ENCODE measurements at regions of chr20 and their contacts with region 1.

Region 1: DNA sequence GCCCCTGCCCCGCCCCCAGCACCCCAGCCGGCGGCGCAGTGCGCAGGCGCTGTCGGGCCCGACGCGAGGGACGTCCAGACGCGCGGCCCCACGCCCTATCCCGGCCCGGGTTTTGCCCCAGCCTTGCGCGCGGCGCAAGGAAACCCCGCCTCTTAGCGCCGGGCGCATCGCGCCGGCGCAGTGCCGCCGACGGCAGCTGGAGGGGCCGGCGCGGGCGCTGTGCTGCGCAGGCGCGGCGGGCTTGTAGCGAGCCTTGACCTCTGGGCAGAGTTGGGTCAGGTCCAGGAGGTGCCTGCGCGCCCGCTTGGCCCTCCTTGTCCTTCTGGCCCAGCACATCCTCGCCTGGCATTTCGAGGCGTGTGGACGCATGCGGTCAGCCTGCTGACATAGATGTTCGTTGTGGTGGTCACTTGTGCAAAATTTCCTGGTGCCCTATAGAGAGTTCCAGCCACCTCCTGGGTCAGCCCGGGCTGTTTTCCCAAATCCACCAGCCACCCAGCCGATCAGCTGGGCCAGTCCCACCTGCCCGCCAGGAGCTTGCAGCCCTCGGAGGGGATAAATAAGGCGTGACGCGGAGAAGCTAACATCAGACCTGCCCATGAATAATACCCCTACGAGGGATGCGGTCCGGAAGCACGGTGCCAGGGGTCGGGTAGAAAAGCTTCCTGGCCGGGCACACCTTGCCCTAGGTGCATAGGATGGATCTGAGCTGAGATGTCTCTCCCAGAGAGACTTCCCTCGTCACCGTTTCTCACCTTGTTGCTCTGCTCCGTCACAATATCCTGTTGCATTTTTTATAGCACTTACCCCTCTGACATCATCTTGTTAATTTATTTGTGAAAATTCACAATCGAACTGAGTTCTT is 442 bp upstream of the PRELID3B start:
- DNase-seq: no peak
- H3K4me3 ChIP-seq: peak overlapping the region; percentile 73 to 91
- H3K27ac ChIP-seq: peak overlapping the region; percentile 88
- H3K4me1 ChIP-seq: peaks cover 33% of the 10 kb centered on the region
- H3K27me3 ChIP-seq: no peaks in the 10 kb centered on the region
- CTCF ChIP-seq: peak in 1 of 3 experiments; percentile 20
- POLR2A ChIP-seq: no peak

Region 2: GRCh38 chr20:58980700-58981627 is 62.1 kb before region 1 on chr20 and contains the start of gene NELFCD:
- intact Hi-C with region 1: loop called (anchors 5 kb)
- DNase-seq: peak in 1 of 2 donors; percentile 87
- H3K4me3 ChIP-seq: peak within 1 kb of the TSS; percentile 71 to 95
- H3K27ac ChIP-seq: peak within 1 kb of the TSS; percentile 83
- H3K4me1 ChIP-seq: peaks cover 39% of the 10 kb centered on the region
- H3K27me3 ChIP-seq: no peaks in the 10 kb centered on the region
- CTCF ChIP-seq: no peak
- POLR2A ChIP-seq: peak in 1 of 2 donors; percentile 64
- total RNA-seq, gene NELFCD: 85.7 TPM

Measured in vagina (tissue), 2 donors.